ENCODE measurements at regions of chr5 and their contacts with region 1.

Region 1: GRCh38 chr5:91419571-91420537 is 36.7 kb upstream of the ARRDC3 start:
- DNase-seq: no peak
- ATAC-seq: peak; percentile 71
- H3K4me3 ChIP-seq: no peak overlapping the region
- H3K27ac ChIP-seq: no peak overlapping the region
- H3K4me1 ChIP-seq: no peaks in the 10 kb centered on the region
- H3K27me3 ChIP-seq: no peaks in the 10 kb centered on the region
- CTCF ChIP-seq: peak; percentile 29 to 60 (median 51); a peak in 5 of 6 replicates
- EP300 ChIP-seq: no peak
- POLR2A ChIP-seq: no peak
- RAD21 ChIP-seq: peak; percentile 76

Region 2: DNA sequence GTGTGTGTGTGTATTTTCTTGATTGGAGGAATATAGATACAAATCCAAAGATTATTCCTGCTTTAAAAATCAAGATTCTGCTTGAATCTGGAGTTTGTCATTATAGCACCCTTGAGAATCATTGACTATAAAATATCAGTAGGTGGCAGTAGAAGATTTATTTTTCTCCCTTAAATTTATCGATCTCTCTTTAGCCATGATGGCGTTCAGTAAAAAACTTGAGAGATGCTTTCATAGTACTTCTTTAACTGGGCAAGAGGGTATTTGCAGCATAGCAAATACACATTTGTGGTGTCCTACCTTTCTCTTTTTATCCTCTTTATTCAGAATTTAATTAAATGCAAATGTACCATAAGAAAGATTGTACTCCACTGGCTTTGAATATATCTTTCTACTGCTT is 553.5 kb before region 1 on chr5:
- CTCF ChIA-PET with region 1: interaction called, 67 read pairs
- POLR2A ChIA-PET with region 1: no interaction called
- RAD21 ChIA-PET with region 1: interaction called, 16 read pairs
- SMC1A ChIA-PET with region 1: interaction called, 37 read pairs
- in situ Hi-C with region 1: loop called (anchors 5 kb)
- intact Hi-C with region 1: loop called (anchors 1 kb)
- DNase-seq: no peak
- ATAC-seq: peak; percentile 67
- H3K4me3 ChIP-seq: no peak overlapping the region
- H3K27ac ChIP-seq: no peak overlapping the region
- H3K4me1 ChIP-seq: no peaks in the 10 kb centered on the region
- H3K27me3 ChIP-seq: no peaks in the 10 kb centered on the region
- CTCF ChIP-seq: peak in 2 of 3 experiments; percentile 23 to 44; a peak in 3 of 6 replicates
- EP300 ChIP-seq: no peak
- POLR2A ChIP-seq: no peak
- RAD21 ChIP-seq: peak; percentile 55; the same call in 1 of the 2 replicates

Region 3: GRCh38 chr5:91101600-91102379 is 318.1 kb before region 1 on chr5:
- CTCF ChIA-PET with region 1: interaction called, 18 read pairs
- POLR2A ChIA-PET with region 1: interaction called, 4 read pairs
- RAD21 ChIA-PET with region 1: interaction called, 20 read pairs
- SMC1A ChIA-PET with region 1: interaction called, 20 read pairs
- in situ Hi-C with region 1: no loop called
- intact Hi-C with region 1: loop called (anchors 1 kb)
- DNase-seq: peak; percentile 21
- ATAC-seq: peak; percentile 99
- H3K4me3 ChIP-seq: no peak overlapping the region
- H3K27ac ChIP-seq: no peak overlapping the region
- H3K4me1 ChIP-seq: no peaks in the 10 kb centered on the region
- H3K27me3 ChIP-seq: no peaks in the 10 kb centered on the region
- CTCF ChIP-seq: peak; percentile 63 to 84 (median 70); a peak in 5 of 6 replicates
- EP300 ChIP-seq: no peak
- POLR2A ChIP-seq: no peak
- RAD21 ChIP-seq: peak; percentile 92

Region 4: DNA sequence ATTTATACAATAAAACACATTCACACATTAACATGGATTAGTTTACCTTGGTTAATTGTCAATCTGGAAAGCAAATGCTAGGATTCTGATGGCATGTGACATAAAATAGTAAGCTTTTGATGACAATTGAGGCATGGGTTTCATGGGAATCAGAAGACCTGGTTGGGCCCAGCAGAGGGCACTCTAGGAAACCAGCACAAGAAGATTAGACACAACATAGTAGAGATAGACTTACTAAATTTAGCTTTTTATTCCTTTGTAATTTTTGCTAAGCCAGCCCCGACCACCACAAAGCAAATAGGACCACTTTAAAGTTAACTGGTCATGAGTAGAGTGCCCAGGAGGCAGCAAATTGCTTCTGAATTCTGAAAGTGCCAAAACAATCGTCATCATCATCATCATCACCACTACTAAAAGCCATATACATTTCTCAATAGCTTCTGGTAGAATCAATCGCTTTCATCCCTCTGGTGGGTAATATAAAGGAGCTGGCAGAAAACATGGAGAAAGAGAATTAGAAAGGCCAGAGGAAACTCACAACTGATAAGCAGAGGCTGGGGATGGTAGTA is 200.0 kb before region 1 on chr5:
- CTCF ChIA-PET with region 1: interaction called, 47 read pairs
- POLR2A ChIA-PET with region 1: interaction called, 7 read pairs
- RAD21 ChIA-PET with region 1: interaction called, 13 read pairs
- SMC1A ChIA-PET with region 1: interaction called, 27 read pairs
- in situ Hi-C with region 1: no loop called
- intact Hi-C with region 1: no loop called
- DNase-seq: no peak
- ATAC-seq: no peak; the same call in 2 of the 3 replicates
- H3K4me3 ChIP-seq: no peak overlapping the region
- H3K27ac ChIP-seq: no peak overlapping the region
- H3K4me1 ChIP-seq: no peaks in the 10 kb centered on the region
- H3K27me3 ChIP-seq: no peaks in the 10 kb centered on the region; a peak in 1 of 4 replicates
- CTCF ChIP-seq: peak; percentile 36 to 47 (median 39)
- EP300 ChIP-seq: no peak
- POLR2A ChIP-seq: no peak
- RAD21 ChIP-seq: peak; percentile 41

Region 5: DNA sequence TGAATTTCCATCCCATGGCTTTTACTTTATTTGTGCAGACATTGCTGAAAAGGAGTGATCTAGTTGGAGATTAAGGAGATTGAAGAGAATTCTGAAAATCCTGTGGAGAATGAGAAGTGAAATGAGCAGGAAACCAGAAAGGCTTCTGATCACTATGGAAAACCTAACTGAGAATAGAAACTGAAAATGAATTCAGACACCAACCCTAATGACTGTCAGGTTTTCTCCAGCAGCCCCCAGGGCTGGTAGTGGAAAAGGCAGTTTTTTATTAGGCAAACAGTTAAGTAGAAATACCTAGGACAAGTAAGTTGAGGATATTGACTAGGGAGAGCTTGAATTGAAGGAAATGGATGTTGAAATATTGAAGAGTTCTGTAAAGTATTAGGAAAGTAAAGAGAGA is 22.1 kb before region 1 on chr5:
- CTCF ChIA-PET with region 1: interaction called, 25 read pairs
- POLR2A ChIA-PET with region 1: no interaction called
- RAD21 ChIA-PET with region 1: interaction called, 5 read pairs
- SMC1A ChIA-PET with region 1: interaction called, 107 read pairs
- in situ Hi-C with region 1: no loop called
- intact Hi-C with region 1: no loop called
- DNase-seq: no peak
- ATAC-seq: peak; percentile 61
- H3K4me3 ChIP-seq: no peak overlapping the region
- H3K27ac ChIP-seq: no peak overlapping the region
- H3K4me1 ChIP-seq: no peaks in the 10 kb centered on the region; the same call in 1 of the 2 replicates
- H3K27me3 ChIP-seq: no peaks in the 10 kb centered on the region
- CTCF ChIP-seq: no peak
- EP300 ChIP-seq: no peak
- POLR2A ChIP-seq: no peak
- RAD21 ChIP-seq: no peak

Region 6: GRCh38 chr5:91408710-91409109 is 11.1 kb before region 1 on chr5:
- CTCF ChIA-PET with region 1: interaction called, 89 read pairs
- POLR2A ChIA-PET with region 1: no interaction called
- RAD21 ChIA-PET with region 1: interaction called, 8 read pairs
- SMC1A ChIA-PET with region 1: interaction called, 16 read pairs
- in situ Hi-C with region 1: no loop called
- intact Hi-C with region 1: no loop called
- DNase-seq: no peak
- ATAC-seq: no peak
- H3K4me3 ChIP-seq: no peak overlapping the region
- H3K27ac ChIP-seq: no peak overlapping the region
- H3K4me1 ChIP-seq: no peaks in the 10 kb centered on the region
- H3K27me3 ChIP-seq: no peaks in the 10 kb centered on the region
- CTCF ChIP-seq: no peak
- EP300 ChIP-seq: no peak
- POLR2A ChIP-seq: no peak
- RAD21 ChIP-seq: no peak

Measured in GM12878 (cell line).